ENCODE measurements at regions of chr7 and their contacts with region 1.

Region 1: GRCh38 chr7:38335492-38336147 is 62.2 kb upstream of the TARP start:
- DNase-seq: peak; percentile 77
- H3K4me3 ChIP-seq: peak overlapping the region; percentile 22
- H3K27ac ChIP-seq: no peak overlapping the region
- H3K27me3 ChIP-seq: no peaks in the 10 kb centered on the region
- CTCF ChIP-seq: peak; percentile 99

Region 2: DNA sequence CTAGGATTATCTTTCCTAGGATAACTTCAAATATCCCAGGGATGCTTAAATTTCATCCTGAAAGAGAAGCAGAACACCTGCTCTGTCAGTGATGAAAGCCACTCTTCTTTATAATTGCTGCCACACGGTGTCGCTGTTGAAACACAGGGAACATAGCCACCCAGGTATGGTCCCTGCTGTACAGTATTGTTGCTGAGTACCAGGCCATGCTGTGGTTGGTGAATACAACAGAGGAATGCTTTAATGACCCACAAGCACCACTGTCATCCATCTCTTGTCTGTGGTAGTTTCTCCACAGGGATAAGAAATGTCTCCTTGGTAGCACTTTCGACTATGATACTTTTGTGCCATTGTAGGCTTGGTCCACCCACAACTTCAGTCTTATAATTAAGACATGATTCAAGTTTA is 228.1 kb before region 1 on chr7:
- CTCF ChIA-PET with region 1: interaction called, 53 read pairs
- POLR2A ChIA-PET with region 1: no interaction called
- DNase-seq: peak; percentile 4
- H3K4me3 ChIP-seq: no peak overlapping the region
- H3K27ac ChIP-seq: no peak overlapping the region
- H3K27me3 ChIP-seq: no peaks in the 10 kb centered on the region
- CTCF ChIP-seq: peak; percentile 83

Region 3: DNA sequence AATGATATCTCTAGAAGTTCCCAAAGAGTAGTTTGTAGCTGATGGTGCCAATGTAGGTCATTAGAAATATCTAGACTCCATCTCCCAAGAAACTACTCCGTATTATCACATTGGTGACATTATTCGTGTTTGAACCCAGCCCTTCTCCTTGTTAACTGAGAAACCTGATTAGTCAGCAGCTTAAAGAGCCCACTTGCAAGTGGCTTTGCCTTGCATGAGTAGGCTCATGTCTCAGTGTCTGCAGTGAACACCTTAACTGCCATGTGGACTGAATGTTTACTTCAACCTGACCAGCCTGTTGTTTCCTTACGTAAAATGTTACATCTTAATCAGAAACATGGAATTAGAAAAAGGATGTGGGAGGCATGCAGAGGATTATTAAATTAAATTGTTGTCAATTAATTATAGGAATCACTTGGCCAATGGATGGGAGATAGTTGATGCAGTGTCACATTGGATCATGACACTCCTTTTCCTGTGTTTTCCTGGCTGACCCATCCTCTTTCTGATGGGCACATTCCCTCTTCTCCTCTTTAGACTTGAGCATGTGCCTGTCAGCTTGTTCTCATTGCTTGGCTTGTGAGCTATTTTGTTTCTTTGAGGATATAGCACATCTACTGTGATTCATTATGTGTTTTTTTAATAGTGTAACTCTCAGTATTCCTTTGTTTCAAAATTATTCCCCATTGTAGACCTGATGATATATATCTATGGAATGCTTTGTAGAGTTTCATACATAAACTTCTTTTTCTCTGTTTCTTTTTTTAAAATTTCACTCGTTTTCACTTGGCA is 139.6 kb before region 1 on chr7:
- CTCF ChIA-PET with region 1: interaction called, 15 read pairs
- POLR2A ChIA-PET with region 1: no interaction called
- DNase-seq: no peak
- H3K4me3 ChIP-seq: no peak overlapping the region
- H3K27ac ChIP-seq: no peak overlapping the region
- H3K27me3 ChIP-seq: no peaks in the 10 kb centered on the region
- CTCF ChIP-seq: no peak

Region 4: DNA sequence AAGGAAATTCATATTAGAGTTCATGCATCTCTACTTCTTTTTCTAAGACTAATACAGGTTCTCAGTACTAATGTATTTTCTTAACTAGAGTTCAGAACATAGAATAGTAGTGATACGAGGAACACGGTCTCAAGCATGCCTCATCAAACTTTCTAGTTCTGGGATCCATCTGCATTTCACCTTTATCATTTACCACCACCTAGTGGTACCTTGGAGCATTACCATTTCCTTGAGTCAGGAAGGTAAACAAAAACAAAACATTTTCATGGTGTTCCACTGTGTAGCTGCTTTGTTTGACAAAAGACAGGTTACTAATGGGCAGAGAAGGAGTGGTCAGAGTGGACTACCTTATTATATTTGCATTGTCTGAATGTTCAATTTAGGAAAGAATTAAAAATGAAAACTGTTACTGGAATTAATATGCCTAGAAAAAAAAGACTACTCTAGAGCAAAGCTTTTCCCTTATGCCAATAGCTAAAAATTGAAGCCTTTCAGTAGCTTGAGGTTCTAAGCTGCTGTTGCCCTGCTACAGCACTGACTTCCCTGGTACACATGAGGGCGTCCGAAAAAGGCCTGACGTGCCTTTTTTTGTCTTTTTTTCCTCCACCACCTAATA is 113.0 kb before region 1 on chr7:
- CTCF ChIA-PET with region 1: interaction called, 104 read pairs
- POLR2A ChIA-PET with region 1: no interaction called
- DNase-seq: peak; percentile 32
- H3K4me3 ChIP-seq: no peak overlapping the region
- H3K27ac ChIP-seq: no peak overlapping the region
- H3K27me3 ChIP-seq: no peaks in the 10 kb centered on the region
- CTCF ChIP-seq: peak; percentile 88

Region 5: DNA sequence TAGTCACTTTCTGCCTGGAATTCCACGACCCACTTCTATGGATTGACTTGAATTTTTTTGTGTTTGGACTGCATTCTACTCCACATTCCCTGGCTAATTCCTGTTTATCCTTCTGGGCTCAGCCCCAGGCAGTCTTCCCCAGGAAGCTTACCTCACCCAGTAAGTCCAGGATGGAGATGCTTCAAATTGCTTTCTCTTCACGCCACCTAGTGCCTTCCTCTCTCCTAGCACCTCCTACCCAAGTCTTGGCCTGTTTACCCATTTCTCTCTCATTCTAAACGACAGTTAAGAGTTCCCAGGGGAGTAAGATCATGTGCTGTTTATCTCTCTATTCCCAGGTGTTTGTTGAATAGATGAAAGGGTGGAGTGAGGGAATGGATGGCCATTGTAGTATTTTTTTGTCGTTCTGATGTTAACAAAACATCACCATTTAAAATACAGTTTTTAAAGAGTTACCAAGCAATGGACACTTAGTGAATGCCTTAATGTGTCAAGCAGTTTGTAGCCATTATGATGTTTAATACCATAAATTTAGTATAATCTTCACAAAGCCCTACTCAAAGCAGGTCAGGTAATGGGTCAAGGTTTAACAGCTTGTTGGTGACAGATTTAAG is 16.7 kb before region 1 on chr7:
- CTCF ChIA-PET with region 1: interaction called, 114 read pairs
- POLR2A ChIA-PET with region 1: interaction called, 3 read pairs
- DNase-seq: peak; percentile 51
- H3K4me3 ChIP-seq: no peak overlapping the region
- H3K27ac ChIP-seq: no peak overlapping the region
- H3K27me3 ChIP-seq: no peaks in the 10 kb centered on the region
- CTCF ChIP-seq: peak; percentile 82

Region 6: GRCh38 chr7:38369816-38370493 is 34.3 kb after region 1 on chr7:
- CTCF ChIA-PET with region 1: interaction called, 45 read pairs
- POLR2A ChIA-PET with region 1: no interaction called
- DNase-seq: peak; percentile 67
- H3K4me3 ChIP-seq: no peak overlapping the region
- H3K27ac ChIP-seq: no peak overlapping the region
- H3K27me3 ChIP-seq: no peaks in the 10 kb centered on the region
- CTCF ChIP-seq: peak; percentile 87

Region 7: DNA sequence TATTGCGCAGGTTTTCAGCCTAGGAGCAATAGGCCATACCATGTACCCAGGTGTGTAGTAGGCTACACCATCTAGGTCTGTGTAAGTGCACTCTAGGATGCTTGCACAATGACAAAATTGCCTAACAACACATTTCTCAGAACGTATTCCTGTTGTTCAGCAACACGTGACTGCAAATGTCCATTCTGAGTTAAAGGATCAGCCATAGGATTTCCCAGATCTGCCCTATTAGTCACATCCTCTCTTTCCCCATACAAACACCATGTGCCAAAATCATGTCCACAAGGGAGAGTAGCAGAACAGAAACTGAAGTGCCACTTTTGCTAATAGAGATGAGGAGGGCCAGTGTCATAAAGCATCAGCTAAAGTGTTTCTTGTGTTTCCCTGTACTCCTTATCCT is 338.2 kb after region 1 on chr7:
- CTCF ChIA-PET with region 1: no interaction called
- POLR2A ChIA-PET with region 1: no interaction called
- DNase-seq: peak; percentile 44
- H3K4me3 ChIP-seq: no peak overlapping the region
- H3K27ac ChIP-seq: no peak overlapping the region
- H3K27me3 ChIP-seq: peaks cover 5% of the 10 kb centered on the region
- CTCF ChIP-seq: no peak